ENCODE measurements at regions of chr12 and their contacts with region 1.

Region 1: DNA sequence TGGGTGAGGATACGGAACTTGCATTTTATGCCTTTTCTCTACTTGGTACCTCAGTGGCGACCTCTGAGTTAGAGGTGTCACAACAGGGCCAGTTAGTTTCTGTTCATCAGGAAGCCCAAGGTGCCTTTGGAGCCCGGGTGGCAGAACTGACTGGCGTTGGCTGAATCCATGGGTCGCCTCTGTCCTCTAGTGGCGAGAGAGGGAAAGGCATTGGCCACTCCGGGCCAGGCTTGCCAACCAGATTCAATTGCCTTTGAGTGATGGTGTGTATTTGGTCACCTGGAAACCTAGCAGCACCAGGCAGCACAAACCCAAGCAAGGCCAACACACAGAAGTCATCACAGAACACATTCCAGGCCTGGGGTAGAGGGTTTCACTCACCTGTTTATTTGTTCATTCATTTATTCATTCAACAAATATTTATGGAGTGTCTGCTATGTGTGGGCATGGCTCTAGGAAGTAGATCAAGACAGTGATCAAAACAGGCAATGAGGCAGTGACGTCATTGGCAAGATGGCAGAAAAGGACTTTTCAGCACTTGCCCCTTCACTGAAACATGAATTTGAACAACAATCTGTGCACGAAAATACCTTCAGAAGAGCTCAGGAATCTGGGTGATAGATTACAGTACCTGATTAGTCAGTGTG is 40.5 kb upstream of the KCNA5 start:
- DNase-seq: peak in 1 of 2 experiments; percentile 49
- H3K4me3 ChIP-seq: no peak overlapping the region
- H3K27ac ChIP-seq: no peak overlapping the region
- H3K4me1 ChIP-seq: no peaks in the 10 kb centered on the region
- H3K27me3 ChIP-seq: peaks cover 12% of the 10 kb centered on the region
- CTCF ChIP-seq: peak; percentile 88

Region 2: DNA sequence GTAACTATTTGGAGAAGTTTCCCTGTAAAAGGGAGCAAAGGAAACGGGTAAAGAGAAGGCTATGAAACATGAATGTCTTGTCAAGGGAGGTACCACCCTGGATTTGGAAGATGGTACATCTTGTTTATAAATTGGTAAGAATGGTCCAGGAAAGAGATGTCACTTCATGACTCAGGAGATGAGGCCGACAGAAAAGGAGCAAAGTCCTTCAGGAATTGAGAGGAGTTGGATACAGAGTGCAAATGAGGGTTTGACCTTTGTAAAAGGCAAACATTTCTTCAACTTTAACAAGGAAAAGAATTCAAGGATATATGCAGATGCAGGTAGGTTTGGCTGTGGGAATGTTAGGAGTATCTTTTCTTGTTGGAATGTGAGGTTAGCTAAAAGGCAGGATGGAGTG is 323.4 kb before region 1 on chr12:
- CTCF ChIA-PET with region 1: no interaction called
- POLR2A ChIA-PET with region 1: no interaction called
- intact Hi-C with region 1: no loop called
- DNase-seq: no peak
- H3K4me3 ChIP-seq: no peak overlapping the region
- H3K27ac ChIP-seq: no peak overlapping the region
- H3K4me1 ChIP-seq: no peaks in the 10 kb centered on the region
- H3K27me3 ChIP-seq: no peaks in the 10 kb centered on the region
- CTCF ChIP-seq: no peak

Region 3: DNA sequence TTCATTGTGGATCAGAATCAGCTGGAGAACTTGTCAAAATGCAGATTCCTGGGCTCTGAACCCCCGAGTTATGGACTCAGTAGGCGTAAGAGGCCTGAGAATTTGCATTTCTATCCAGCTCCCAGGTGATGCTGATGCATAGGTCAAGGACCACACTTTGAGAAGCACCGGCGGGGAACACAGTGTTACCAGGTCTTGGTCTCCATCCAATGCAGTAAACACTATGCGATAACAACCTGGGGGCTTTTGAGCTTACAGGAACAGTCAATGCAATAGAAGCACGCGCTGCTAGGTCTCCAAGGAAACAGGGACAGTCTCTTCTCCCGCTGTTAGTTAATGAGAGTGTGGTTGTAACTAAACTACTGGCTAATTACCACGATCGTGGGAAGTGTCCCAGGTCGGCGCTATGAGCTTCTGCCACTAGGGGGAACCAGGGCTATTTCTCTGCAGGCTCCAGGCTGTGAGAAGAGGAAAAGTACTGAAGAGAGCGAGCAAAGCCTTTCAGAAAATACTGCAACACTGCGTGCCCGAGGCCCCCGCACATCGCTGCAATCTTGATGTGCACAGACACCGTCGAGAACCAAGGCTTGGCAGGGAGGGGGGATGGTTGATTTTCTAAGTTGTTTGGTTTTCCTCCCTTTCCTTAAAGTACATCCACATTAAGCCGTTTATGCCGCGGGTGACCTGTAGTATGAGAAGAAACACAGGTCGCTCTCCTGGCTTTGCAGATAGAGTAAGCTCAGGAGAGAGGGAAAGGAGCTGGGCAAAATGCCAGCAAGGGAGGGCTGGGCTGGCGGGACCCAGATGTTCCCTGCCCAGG is 145.5 kb before region 1 on chr12:
- CTCF ChIA-PET with region 1: no interaction called
- POLR2A ChIA-PET with region 1: no interaction called
- intact Hi-C with region 1: loop called (anchors 1 kb)
- DNase-seq: peak in 1 of 2 experiments; percentile 53
- H3K4me3 ChIP-seq: no peak overlapping the region
- H3K27ac ChIP-seq: no peak overlapping the region
- H3K4me1 ChIP-seq: no peaks in the 10 kb centered on the region
- H3K27me3 ChIP-seq: peaks cover 95% of the 10 kb centered on the region
- CTCF ChIP-seq: peak; percentile 89

Region 4: DNA sequence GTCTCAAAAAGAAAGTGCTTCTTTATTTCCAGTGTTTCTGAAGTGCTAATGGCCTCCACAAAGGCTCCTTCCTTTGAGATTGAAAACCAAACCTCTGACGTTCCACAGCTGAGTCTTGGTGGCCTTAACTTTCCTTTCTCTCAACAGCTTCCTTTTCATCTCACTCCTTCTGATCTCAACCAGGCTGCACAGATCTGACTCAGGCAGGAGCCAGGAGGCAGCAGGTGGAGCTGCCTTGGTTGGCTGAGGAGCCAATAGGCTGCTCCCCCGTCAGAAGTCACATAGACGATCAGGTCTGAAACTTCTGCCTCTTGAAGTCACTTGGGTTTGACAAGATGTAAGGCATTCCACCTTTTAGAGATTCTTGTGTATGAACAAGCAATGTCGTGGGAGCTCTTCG is 31.5 kb after region 1 on chr12:
- CTCF ChIA-PET with region 1: no interaction called
- POLR2A ChIA-PET with region 1: no interaction called
- intact Hi-C with region 1: no loop called
- DNase-seq: no peak
- H3K4me3 ChIP-seq: no peak overlapping the region
- H3K27ac ChIP-seq: no peak overlapping the region
- H3K4me1 ChIP-seq: no peaks in the 10 kb centered on the region
- H3K27me3 ChIP-seq: peaks cover 78% of the 10 kb centered on the region
- CTCF ChIP-seq: no peak